ENCODE measurements at regions of chr16 and their contacts with region 1.

Region 1: GRCh38 chr16:56211435-56211981 is 20.2 kb downstream of the GNAO1 start:
- DNase-seq: no peak
- H3K4me3 ChIP-seq: no peak overlapping the region
- CTCF ChIP-seq: no peak

Region 2: GRCh38 chr16:56038564-56039098 is 172.9 kb before region 1 on chr16:
- in situ Hi-C with region 1: loop called (anchors 10 kb)
- DNase-seq: no peak
- H3K4me3 ChIP-seq: no peak overlapping the region
- CTCF ChIP-seq: no peak